ENCODE measurements at regions of chr13 and their contacts with region 1.

Region 1: GRCh38 chr13:91381371-91381770 is 17.1 kb upstream of the GPC5 start:
- DNase-seq: no peak
- ATAC-seq: no peak

Region 2: GRCh38 chr13:91167706-91168385 is 213.5 kb before region 1 on chr13:
- intact Hi-C with region 1: no loop called
- DNase-seq: no peak
- ATAC-seq: no peak

Region 3: GRCh38 chr13:91313103-91313502 is 68.3 kb before region 1 on chr13:
- intact Hi-C with region 1: no loop called
- DNase-seq: no peak
- ATAC-seq: peak in 1 of 2 donors; percentile 34

Region 4: GRCh38 chr13:91722267-91722884 is 341.0 kb after region 1 on chr13:
- intact Hi-C with region 1: loop called (anchors 2 to 10 kb)
- DNase-seq: no peak
- ATAC-seq: no peak

Region 5: GRCh38 chr13:91776611-91777193 is 395.3 kb after region 1 on chr13:
- intact Hi-C with region 1: loop called in 1 of 2 experiments (anchors 10 kb)
- DNase-seq: no peak
- ATAC-seq: no peak